HEK293 (cell line): ENCODE measurements at regions of chr17 and their contacts with region 1.

Region 1: GRCh38 chr17:45148183-45149036 is at the start of gene HEXIM1:
- H3K4me3 ChIP-seq: peak within 1 kb of the TSS; percentile 72
- H3K27ac ChIP-seq: peak within 1 kb of the TSS; percentile 92
- H3K4me1 ChIP-seq: peaks cover 10% of the 10 kb centered on the region; the same call in 1 of the 2 replicates
- CTCF ChIP-seq: peak; percentile 40; the same call in 1 of the 2 replicates

Region 2: GRCh38 chr17:44775136-44775837 is 373.1 kb before region 1 on chr17:
- CTCF ChIA-PET with region 1: no interaction called
- POLR2A ChIA-PET with region 1: interaction called, 10 read pairs
- H3K4me3 ChIP-seq: peak overlapping the region; percentile 58
- H3K27ac ChIP-seq: peak overlapping the region; percentile 25; the same call in 1 of the 2 replicates
- H3K4me1 ChIP-seq: no peaks in the 10 kb centered on the region
- CTCF ChIP-seq: peak; percentile 36; the same call in 1 of the 2 replicates

Region 3: DNA sequence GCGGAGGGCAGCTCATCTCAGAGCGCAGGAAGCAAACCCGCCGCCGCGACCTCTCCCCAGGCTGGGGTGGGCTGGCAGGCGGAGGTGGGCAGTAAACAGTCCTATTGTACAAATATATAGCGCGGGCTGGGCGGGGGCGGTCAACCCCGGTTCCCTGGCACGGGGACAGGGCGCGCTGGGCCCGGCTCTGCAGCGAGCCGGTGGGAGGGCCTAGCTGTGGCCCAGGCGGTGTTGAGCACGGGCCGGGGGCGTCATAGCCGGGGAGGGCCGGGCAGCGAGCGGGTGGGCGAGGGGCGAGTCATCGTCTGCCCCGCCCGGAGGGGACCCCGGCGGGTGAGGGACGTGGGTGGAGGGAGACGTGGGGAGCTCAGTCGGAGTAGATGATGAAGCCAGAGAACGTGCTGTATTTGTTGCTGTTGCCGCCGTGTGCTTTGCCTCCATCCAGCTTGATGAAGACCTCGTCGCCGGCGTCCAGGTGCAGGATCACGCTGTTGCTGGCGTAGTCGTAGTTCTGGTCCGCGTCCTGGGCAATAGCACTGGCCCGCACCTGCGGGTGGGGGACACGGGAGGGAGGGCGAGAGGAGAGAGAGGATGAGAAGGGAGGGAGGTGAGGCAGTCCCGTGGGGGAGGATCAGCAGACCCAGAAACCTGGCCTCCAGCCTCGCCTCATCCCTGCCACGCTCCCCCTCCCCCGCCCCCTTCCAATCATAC is 188.4 kb before region 1 on chr17:
- CTCF ChIA-PET with region 1: no interaction called
- POLR2A ChIA-PET with region 1: no interaction called
- H3K4me3 ChIP-seq: no peak overlapping the region
- H3K27ac ChIP-seq: no peak overlapping the region
- H3K4me1 ChIP-seq: 0 out of 2 replicates have a peak, but pooled peaks cover 3% of the 10 kb centered on the region
- CTCF ChIP-seq: no peak

Region 4: DNA sequence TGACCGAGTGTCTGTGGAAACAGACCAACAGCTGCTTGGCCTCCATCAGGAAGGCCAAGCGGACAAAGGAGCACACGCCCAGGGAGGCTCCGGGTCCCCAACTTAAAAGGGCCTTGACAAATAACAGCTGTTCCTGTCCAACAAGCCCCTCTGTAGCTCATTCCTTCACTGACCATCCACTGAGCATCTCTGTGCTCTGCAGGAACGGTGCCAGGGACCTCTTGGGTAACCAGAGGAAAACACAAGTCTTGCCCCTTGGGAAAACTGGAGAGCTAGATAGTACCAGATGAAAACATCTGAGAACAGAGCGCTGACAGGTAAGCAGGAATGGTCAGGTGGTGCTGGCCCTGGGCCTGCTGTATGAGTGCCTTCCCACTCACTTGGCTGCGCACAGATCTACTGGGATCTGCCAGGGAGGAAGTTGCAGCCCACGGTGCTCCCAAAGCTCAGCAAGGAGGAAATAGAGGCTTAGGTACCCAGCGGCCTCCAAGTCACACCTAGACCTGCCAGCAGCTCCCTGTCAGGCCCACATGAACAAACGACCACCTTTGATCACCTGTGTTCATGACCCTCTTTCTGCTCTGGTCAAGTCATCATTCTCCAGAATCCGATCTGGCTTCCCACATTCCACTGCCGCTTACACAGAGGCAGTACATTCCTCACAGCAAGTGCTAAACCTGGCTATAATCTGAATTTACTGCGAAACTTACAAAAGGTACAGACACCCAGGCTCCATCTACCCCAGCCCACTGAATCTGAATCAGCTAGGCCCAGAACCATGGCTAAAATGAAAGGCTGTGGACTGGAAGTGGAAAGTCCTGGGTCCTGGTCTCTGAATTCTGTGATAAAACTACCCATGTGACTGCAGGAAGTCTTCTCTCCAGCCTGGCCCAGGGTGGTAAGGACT is 109.4 kb before region 1 on chr17:
- CTCF ChIA-PET with region 1: no interaction called
- POLR2A ChIA-PET with region 1: no interaction called
- H3K4me3 ChIP-seq: no peak overlapping the region
- H3K27ac ChIP-seq: peak overlapping the region; percentile 34; the same call in 1 of the 2 replicates
- H3K4me1 ChIP-seq: peaks cover 8% of the 10 kb centered on the region; the same call in 1 of the 2 replicates
- CTCF ChIP-seq: no peak

Region 5: DNA sequence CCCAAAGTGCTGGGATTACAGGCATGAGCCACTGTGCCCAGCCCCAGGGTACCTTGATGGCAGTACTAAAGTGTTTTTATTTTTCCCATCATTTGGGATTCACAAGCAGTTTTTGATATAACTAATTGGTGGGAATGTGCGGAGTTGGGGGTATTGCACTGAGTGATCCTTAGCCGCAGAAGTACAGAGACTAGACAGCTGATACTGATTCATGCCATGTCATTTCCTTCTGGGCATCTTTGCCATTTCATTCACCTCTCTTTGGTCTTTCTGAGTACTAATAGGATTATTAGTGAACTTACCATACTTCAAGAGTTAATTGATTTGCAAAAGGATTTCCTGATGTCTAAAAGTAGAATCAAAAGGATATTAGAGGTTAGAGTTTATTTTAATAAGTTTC is 77.6 kb before region 1 on chr17:
- CTCF ChIA-PET with region 1: no interaction called
- POLR2A ChIA-PET with region 1: no interaction called
- H3K4me3 ChIP-seq: no peak overlapping the region
- H3K27ac ChIP-seq: no peak overlapping the region
- H3K4me1 ChIP-seq: peaks cover 14% of the 10 kb centered on the region
- CTCF ChIP-seq: no peak

Region 6: GRCh38 chr17:45123930-45124796 is 24.2 kb before region 1 on chr17:
- CTCF ChIA-PET with region 1: interaction called, 3 read pairs
- POLR2A ChIA-PET with region 1: interaction called, 17 read pairs
- H3K4me3 ChIP-seq: no peak overlapping the region
- H3K27ac ChIP-seq: no peak overlapping the region
- H3K4me1 ChIP-seq: peaks cover 7% of the 10 kb centered on the region
- CTCF ChIP-seq: no peak

Region 7: GRCh38 chr17:45172454-45173286 is 24.3 kb after region 1 on chr17:
- CTCF ChIA-PET with region 1: interaction called, 7 read pairs
- POLR2A ChIA-PET with region 1: interaction called, 86 read pairs
- H3K4me3 ChIP-seq: no peak overlapping the region
- H3K27ac ChIP-seq: peak overlapping the region; percentile 34
- H3K4me1 ChIP-seq: peaks cover 23% of the 10 kb centered on the region
- CTCF ChIP-seq: 0 out of 2 replicates have a peak, but pooled peaks have one; percentile 41

Region 8: DNA sequence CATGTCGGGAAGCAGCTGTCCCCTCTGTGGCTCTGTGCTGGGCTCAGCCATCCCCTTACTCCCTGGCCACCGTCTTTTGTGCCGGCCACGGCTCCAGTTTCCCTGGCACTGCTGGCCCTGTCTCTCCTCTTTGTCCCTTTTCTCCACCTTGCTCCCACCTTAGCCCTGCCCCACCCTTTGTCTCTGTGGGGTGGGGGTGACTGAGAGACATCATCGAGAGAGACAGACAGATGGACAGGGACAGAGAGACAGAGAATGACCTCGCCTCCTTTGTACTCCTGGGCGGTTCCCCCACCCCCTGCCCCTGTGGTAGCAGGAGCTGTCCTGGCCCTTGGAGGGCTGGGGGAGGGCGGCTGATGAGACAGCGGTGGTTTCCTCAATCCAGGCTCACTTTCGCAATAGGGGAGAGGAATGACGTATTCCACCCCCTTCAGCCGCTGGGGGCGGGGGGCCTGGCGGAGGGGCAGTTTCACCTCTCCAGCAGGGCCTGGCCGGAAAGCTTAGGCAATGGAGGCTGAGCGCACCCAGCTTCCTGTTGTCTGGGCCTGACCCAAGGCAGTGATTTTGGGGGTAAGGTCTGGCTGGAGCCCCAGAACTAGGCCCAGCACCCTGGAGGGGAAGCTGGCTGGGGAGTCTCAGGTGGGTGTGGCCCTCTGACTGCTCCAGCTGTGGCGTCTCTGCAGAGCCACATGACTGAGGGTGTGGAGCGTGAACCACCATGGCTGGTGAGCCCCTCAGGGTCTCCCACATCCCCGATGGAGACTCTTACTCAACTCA is 80.5 kb after region 1 on chr17:
- CTCF ChIA-PET with region 1: interaction called, 11 read pairs
- POLR2A ChIA-PET with region 1: interaction called, 10 read pairs
- H3K4me3 ChIP-seq: no peak overlapping the region
- H3K27ac ChIP-seq: no peak overlapping the region
- H3K4me1 ChIP-seq: no peaks in the 10 kb centered on the region; the same call in 1 of the 2 replicates
- CTCF ChIP-seq: no peak

Region 9: GRCh38 chr17:45317112-45317928 is 168.9 kb after region 1 on chr17:
- CTCF ChIA-PET with region 1: no interaction called
- POLR2A ChIA-PET with region 1: interaction called, 17 read pairs
- H3K4me3 ChIP-seq: peak overlapping the region; percentile 23
- H3K27ac ChIP-seq: peak overlapping the region; percentile 75
- H3K4me1 ChIP-seq: peaks cover 52% of the 10 kb centered on the region
- CTCF ChIP-seq: peak; percentile 37; the same call in 1 of the 2 replicates